Activated naive CD4-positive, alpha-beta T cell treated with anti-CD3 and anti-CD28 coated beads for 36 hours (primary cell): ENCODE measurements at regions of chr3 and their contacts with region 1.

Region 1: GRCh38 chr3:100089812-100090668 is 24.3 kb downstream of the FILIP1L start:
- DNase-seq: peak; percentile 19
- H3K4me3 Mint-ChIP-seq: no peak overlapping the region
- H3K27ac Mint-ChIP-seq: no peak overlapping the region
- H3K4me1 Mint-ChIP-seq: peaks cover 8% of the 10 kb centered on the region
- H3K27me3 Mint-ChIP-seq: no peaks in the 10 kb centered on the region

Region 2: DNA sequence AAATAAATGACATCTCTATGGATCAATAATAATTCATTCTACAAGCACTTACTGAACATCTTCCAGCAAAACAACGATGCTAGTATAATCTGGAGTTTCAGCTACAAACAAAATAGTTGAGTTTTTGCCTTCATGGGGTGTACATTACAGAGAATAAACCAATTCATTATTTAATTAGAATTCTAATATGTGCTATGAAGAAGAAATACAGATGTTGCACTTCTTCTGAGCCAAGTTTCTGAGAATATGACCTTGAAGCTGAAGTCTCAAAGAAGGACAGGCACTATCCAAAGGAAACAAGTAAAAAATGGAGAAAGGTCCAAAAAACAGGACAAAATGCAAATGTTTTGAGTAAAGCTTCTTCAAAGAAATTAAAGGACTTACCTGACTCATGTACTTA is 1328.8 kb after region 1 on chr3:
- CTCF ChIA-PET with region 1: no interaction called
- intact Hi-C with region 1: loop called (anchors 5 kb)
- DNase-seq: no peak
- H3K4me3 Mint-ChIP-seq: no peak overlapping the region
- H3K27ac Mint-ChIP-seq: no peak overlapping the region
- H3K4me1 Mint-ChIP-seq: peaks cover 46% of the 10 kb centered on the region
- H3K27me3 Mint-ChIP-seq: no peaks in the 10 kb centered on the region